ENCODE measurements at regions of chr3 and their contacts with region 1.

Region 1: DNA sequence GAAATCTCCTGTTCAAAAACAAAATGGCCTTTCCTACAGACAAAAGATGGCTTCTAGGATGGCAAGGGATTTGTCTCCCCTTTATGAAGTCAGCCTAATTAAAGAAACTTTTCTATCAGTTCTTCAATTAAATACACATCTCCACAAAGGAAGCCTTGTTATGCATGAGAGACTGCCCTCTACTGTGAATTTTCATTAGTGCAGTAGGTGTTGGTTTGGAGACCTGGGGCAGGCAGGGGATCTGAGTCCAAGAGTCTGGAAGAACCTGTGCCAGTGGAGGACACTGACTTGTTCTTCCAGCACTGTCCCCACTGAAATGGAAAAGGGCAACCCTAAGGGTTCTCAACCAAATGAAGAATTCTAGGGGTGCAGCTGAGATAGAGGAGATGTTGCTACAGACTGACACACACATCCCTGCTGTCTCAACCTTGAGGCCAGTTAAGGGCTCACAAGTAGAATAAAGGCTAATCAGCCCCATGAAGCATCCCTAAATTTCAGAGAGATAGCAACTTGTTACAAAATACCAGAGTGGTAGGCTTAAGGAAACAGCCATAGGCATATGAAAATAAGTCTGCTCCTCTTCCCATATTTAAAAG is 174.0 kb upstream of the PRICKLE2 start:
- DNase-seq: peak; percentile 78
- H3K4me3 Mint-ChIP-seq: no peak overlapping the region
- H3K27ac Mint-ChIP-seq: no peak overlapping the region
- H3K4me1 Mint-ChIP-seq: no peaks in the 10 kb centered on the region
- H3K27me3 Mint-ChIP-seq: no peaks in the 10 kb centered on the region
- CTCF ChIP-seq: peak; percentile 83

Region 2: GRCh38 chr3:64030741-64031140 is 368.6 kb before region 1 on chr3:
- CTCF ChIA-PET with region 1: interaction called, 44 read pairs
- POLR2A ChIA-PET with region 1: no interaction called
- intact Hi-C with region 1: loop called (anchors 1 kb)
- DNase-seq: peak; percentile 75
- H3K4me3 Mint-ChIP-seq: peak overlapping the region; percentile 65
- H3K27ac Mint-ChIP-seq: no peak overlapping the region
- H3K4me1 Mint-ChIP-seq: peaks cover 8% of the 10 kb centered on the region
- H3K27me3 Mint-ChIP-seq: peaks cover 30% of the 10 kb centered on the region
- CTCF ChIP-seq: peak; percentile 86

Region 3: GRCh38 chr3:64187065-64187959 is 212.0 kb before region 1 on chr3:
- CTCF ChIA-PET with region 1: interaction called, 6 read pairs
- POLR2A ChIA-PET with region 1: no interaction called
- intact Hi-C with region 1: loop called (anchors 2 kb)
- DNase-seq: peak; percentile 93
- H3K4me3 Mint-ChIP-seq: peak overlapping the region; percentile 62
- H3K27ac Mint-ChIP-seq: peak overlapping the region; percentile 83
- H3K4me1 Mint-ChIP-seq: peaks cover 66% of the 10 kb centered on the region
- H3K27me3 Mint-ChIP-seq: no peaks in the 10 kb centered on the region
- CTCF ChIP-seq: no peak

Region 4: DNA sequence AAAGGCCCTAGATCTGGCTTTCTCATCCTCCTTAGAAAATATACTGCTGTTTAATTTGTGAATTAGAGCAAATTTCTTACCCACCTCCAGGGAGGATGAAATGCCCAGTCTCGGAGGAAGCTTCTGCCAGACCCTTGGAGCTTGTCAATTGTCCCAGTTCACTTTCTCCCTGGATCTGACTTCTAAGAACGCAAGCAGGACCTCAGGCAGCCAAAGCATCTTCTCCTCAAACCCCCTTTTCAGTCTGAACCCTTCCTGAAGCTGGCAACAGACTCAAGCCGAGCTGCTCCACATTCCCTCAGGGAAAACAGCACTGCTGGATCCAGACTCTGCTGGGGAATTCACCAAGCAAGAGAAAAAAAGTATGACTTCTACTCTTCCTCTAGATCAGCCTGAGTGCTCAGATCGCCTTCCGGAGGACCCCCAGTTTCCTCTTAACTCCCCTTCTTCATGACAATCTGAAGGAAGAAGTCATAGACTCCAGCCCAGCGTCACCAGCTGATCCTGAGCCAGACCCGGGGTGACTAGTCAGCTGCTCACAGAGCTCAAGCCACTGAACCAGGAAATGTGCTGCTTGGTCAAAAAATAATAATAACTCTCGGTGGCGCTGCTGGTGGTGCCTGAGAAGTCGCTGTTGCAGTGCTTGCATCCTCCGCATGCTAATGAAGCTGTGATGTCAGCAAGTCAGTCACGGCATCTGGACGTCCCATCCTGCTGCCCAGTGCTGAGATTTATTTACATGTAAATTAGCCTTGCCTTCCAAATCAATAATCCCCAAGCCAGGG is 174.3 kb before region 1 on chr3 and contains the start of gene PRICKLE2:
- CTCF ChIA-PET with region 1: interaction called, 5 read pairs
- POLR2A ChIA-PET with region 1: no interaction called
- intact Hi-C with region 1: loop called (anchors 2 kb)
- DNase-seq: no peak
- H3K4me3 Mint-ChIP-seq: peak within 1 kb of the TSS; percentile 6
- H3K27ac Mint-ChIP-seq: peak within 1 kb of the TSS; percentile 7
- H3K4me1 Mint-ChIP-seq: peaks cover 11% of the 10 kb centered on the region
- H3K27me3 Mint-ChIP-seq: no peaks in the 10 kb centered on the region
- CTCF ChIP-seq: no peak
- total RNA-seq, gene PRICKLE2: 9.6 and 11.4 TPM in 2 replicates

Region 5: DNA sequence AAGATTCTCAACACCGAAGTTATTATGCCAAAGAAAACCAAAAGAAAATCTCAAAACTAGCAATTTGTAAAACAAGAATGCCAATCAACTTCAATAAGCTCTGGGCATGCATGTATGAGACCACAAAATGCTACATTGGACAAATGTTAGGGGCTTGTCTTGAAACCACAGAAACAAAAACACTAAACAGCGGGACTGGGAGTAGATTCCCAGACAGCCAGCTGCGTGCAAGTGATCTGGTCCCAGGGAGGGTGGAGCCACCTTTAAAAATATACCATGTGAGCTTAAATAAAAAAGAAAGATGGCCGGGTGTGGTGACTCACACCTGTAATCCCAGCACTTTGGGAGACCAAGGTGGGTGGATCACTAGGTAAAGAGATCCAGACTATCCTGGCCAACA is 10.4 kb before region 1 on chr3:
- CTCF ChIA-PET with region 1: interaction called, 16 read pairs
- POLR2A ChIA-PET with region 1: interaction called, 3 read pairs
- intact Hi-C with region 1: no loop called
- DNase-seq: no peak
- H3K4me3 Mint-ChIP-seq: no peak overlapping the region
- H3K27ac Mint-ChIP-seq: no peak overlapping the region
- H3K4me1 Mint-ChIP-seq: no peaks in the 10 kb centered on the region
- H3K27me3 Mint-ChIP-seq: no peaks in the 10 kb centered on the region
- CTCF ChIP-seq: no peak

Region 6: GRCh38 chr3:64575211-64575844 is 176.0 kb after region 1 on chr3:
- CTCF ChIA-PET with region 1: no interaction called
- POLR2A ChIA-PET with region 1: no interaction called
- intact Hi-C with region 1: no loop called
- DNase-seq: peak; percentile 48
- H3K4me3 Mint-ChIP-seq: no peak overlapping the region
- H3K27ac Mint-ChIP-seq: no peak overlapping the region
- H3K4me1 Mint-ChIP-seq: peaks cover 9% of the 10 kb centered on the region
- H3K27me3 Mint-ChIP-seq: no peaks in the 10 kb centered on the region
- CTCF ChIP-seq: peak; percentile 50

Measured in MCF 10A (cell line).